ENCODE measurements at regions of chr18 and their contacts with region 1.

Region 1: GRCh38 chr18:79975985-79976680 is 11.7 kb downstream of the HSBP1L1 start:
- DNase-seq: no peak
- ATAC-seq: no peak
- H3K4me3 Mint-ChIP-seq: no peak overlapping the region
- H3K27ac Mint-ChIP-seq: peak overlapping the region; percentile 2
- H3K4me1 Mint-ChIP-seq: peaks cover 20% of the 10 kb centered on the region
- H3K27me3 Mint-ChIP-seq: no peaks in the 10 kb centered on the region

Region 2: DNA sequence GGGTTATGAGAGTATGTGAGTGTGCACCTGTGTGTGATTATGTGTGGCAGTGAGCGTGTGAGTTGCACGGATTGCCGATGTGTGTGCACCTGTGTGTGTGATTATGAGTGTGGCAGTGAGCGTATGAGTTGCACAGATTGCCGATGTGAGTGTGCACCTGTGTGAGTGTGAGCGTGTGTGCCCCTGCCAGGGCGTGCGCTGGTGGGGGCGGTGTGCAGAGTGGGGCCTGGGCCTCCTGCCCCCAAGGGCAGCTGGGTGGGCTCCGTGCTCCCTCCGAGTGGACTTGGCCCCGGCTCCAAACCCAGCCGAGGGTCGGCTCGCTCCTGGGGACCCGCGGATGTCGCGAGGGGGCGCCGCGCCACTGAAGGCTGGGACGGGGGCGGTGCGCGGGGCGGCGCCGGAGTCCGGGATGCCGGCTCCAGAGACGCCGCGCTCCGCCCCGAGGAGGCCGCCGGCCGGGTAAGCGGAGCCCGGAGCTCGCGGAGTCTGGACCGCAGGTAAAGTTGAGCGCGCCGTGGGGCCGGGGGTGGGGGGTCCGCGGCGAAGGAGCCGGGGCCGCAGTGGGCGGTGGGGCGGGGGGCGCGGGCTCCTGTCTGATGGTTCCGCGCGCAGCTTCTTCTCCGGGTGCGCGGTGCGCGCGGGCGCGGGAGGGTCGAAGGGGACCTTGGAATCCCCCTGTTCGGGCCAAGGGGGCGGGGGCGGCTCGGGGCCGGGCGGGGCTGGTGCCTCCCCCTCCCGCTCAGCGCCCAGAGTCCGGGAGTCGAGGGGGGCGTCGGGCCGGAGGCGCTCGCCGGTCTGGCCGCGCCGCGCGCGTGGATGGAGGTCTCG is 178.4 kb before region 1 on chr18 and contains the start of gene KCNG2:
- CTCF ChIA-PET with region 1: no interaction called
- POLR2A ChIA-PET with region 1: no interaction called
- intact Hi-C with region 1: loop called in 1 of 2 experiments (anchors 5 kb)
- DNase-seq: peak; percentile 67
- ATAC-seq: peak; percentile 83
- H3K4me3 Mint-ChIP-seq: peak within 1 kb of the TSS; percentile 56
- H3K27ac Mint-ChIP-seq: no peak within 1 kb of the TSS
- H3K4me1 Mint-ChIP-seq: peaks cover 11% of the 10 kb centered on the region
- H3K27me3 Mint-ChIP-seq: peaks cover 31% of the 10 kb centered on the region
- total RNA-seq, gene KCNG2: not detected

Measured in activated CD4-positive, alpha-beta T cell treated with anti-CD3 and anti-CD28 coated beads for 36 hours (primary cell).